Activated T-helper 1 cell treated with anti-CD3 and anti-CD28 coated beads, Interleukin-12 subunit alpha, Interleukin-12 subunit beta, Interleukin-2, Interleukin-4 antibody, amounts not matched to agents 30 ng/mL and 10 ng/mL and 1 ng/mL, durations not matched to agents 14 hours and 24 hours and 36 hours (primary cell): ENCODE measurements at regions of chr10 and their contacts with region 1.

Region 1: DNA sequence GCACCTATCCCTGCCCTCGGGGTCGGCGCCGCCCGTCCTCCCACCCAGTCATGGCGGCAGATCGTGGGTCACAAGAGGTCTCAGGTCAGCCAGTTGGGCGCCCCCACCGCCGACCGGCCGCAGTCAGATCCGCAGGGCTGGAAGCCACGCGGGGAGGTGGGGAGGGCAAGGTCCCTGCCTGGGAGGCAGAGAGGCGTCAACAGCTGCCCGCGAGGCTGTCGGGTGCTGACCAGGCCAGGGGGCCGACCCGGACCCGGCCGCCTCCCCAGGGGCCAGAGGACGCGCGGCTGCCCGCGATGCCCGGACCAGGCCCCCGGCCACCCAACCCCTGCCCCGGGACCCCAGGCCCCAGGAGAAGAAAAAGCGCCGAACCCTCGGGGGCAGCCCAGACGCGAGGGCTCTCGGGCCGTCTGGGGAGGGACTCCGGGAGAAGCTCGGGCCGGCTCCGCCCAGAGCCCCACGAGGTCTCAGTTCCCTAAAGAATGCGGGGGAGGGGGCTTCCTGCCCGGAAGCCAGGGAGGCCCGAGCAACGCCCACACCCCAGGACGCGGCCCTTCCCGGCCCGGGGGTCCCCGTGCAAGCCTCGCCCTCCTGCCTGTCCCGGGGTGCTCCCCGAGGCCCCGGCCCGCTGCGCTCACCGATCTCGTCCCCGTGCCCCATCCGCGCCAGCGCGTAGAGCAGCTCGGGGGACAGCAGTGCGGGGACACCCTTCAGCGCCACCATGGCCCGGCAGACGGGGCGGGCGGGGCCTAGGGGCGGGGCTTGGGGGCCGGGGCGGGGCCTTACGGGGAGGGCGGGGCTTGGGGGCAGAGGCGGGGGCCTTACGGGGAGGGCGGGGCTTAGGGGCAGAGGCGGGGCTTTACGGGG is at the start of gene FUOM:
- DNase-seq: peak; percentile 57
- H3K4me3 Mint-ChIP-seq: peak within 1 kb of the TSS; percentile 77
- H3K27ac Mint-ChIP-seq: peak within 1 kb of the TSS; percentile 48
- H3K4me1 Mint-ChIP-seq: no peaks in the 10 kb centered on the region
- H3K27me3 Mint-ChIP-seq: no peaks in the 10 kb centered on the region
- total RNA-seq, gene FUOM: 45.4 and 51.8 TPM in 2 replicates

Region 2: GRCh38 chr10:133261726-133262325 is 95.7 kb before region 1 on chr10:
- intact Hi-C with region 1: loop called (anchors 1 kb)
- DNase-seq: peak; percentile 76
- H3K4me3 Mint-ChIP-seq: peak overlapping the region; percentile 65
- H3K27ac Mint-ChIP-seq: peak overlapping the region; percentile 48
- H3K4me1 Mint-ChIP-seq: peaks cover 56% of the 10 kb centered on the region
- H3K27me3 Mint-ChIP-seq: peaks cover 5% of the 10 kb centered on the region

Region 3: GRCh38 chr10:133324198-133324792 is 33.2 kb before region 1 on chr10:
- intact Hi-C with region 1: loop called (anchors 1 kb)
- DNase-seq: peak; percentile 40
- H3K4me3 Mint-ChIP-seq: no peak overlapping the region
- H3K27ac Mint-ChIP-seq: no peak overlapping the region
- H3K4me1 Mint-ChIP-seq: peaks cover 3% of the 10 kb centered on the region
- H3K27me3 Mint-ChIP-seq: peaks cover 34% of the 10 kb centered on the region

Region 4: GRCh38 chr10:133329491-133330202 is 27.9 kb before region 1 on chr10:
- intact Hi-C with region 1: loop called (anchors 1 kb)
- DNase-seq: peak; percentile 77
- H3K4me3 Mint-ChIP-seq: peak overlapping the region; percentile 64
- H3K27ac Mint-ChIP-seq: no peak overlapping the region
- H3K4me1 Mint-ChIP-seq: peaks cover 3% of the 10 kb centered on the region
- H3K27me3 Mint-ChIP-seq: peaks cover 72% of the 10 kb centered on the region

Region 5: GRCh38 chr10:133373104-133373624 is 15.6 kb after region 1 on chr10 and contains the start of gene ECHS1:
- intact Hi-C with region 1: loop called (anchors 1 kb)
- DNase-seq: peak; percentile 95
- H3K4me3 Mint-ChIP-seq: peak within 1 kb of the TSS; percentile 91
- H3K27ac Mint-ChIP-seq: peak within 1 kb of the TSS; percentile 84
- H3K4me1 Mint-ChIP-seq: peaks cover 5% of the 10 kb centered on the region
- H3K27me3 Mint-ChIP-seq: peaks cover 16% of the 10 kb centered on the region
- total RNA-seq, gene ECHS1: 69.3 and 69.6 TPM in 2 replicates

Region 6: GRCh38 chr10:133378251-133379096 is 21.0 kb after region 1 on chr10:
- intact Hi-C with region 1: loop called (anchors 1 kb)
- DNase-seq: peak; percentile 51
- H3K4me3 Mint-ChIP-seq: peak overlapping the region; percentile 79
- H3K27ac Mint-ChIP-seq: peak overlapping the region; percentile 44
- H3K4me1 Mint-ChIP-seq: peaks cover 11% of the 10 kb centered on the region
- H3K27me3 Mint-ChIP-seq: peaks cover 16% of the 10 kb centered on the region